CD4-positive, alpha-beta T cell (primary cell): ENCODE measurements at regions of chr6 and their contacts with region 1.

Region 1: DNA sequence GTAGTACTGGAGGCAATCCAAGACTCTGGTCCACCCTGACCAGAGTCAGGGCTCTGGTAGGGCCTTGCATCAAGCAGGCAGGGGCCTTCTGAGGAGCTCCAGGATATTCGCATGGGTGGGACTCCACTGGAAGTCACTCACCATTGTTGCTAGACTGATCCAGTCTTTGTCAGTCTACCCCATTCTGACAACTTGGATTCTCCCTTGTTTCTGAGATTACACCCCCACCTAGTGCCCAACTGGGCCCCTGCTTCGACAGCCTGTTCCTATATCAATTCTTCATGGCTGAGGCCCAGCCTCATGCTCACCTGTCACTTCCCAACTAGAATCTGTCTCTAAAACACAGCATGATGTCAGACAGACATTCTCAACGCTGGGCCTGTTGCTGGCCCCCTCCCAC is 5.2 kb downstream of the SLC35D3 start:
- DNase-seq: peak in 5 of 14 experiments; percentile 4 to 31 (median 21)
- ATAC-seq: no peak
- H3K4me3 ChIP-seq: no peak overlapping the region
- H3K4me3 Mint-ChIP-seq: no peak overlapping the region
- H3K27ac ChIP-seq: no peak overlapping the region
- H3K27ac Mint-ChIP-seq: no peak overlapping the region
- H3K4me1 ChIP-seq: peaks cover 17% of the 10 kb centered on the region
- H3K4me1 Mint-ChIP-seq: no peaks in the 10 kb centered on the region
- H3K27me3 ChIP-seq: peaks cover 21 to 27% of the 10 kb centered on the region in 2 experiments
- H3K27me3 Mint-ChIP-seq: peaks cover 55% of the 10 kb centered on the region
- CTCF ChIP-seq: peak; percentile 12

Region 2: GRCh38 chr6:136607932-136608772 is 319.1 kb before region 1 on chr6:
- CTCF ChIA-PET with region 1: no interaction called
- POLR2A ChIA-PET with region 1: no interaction called
- intact Hi-C with region 1: loop called in 1 of 2 experiments (anchors 5 kb)
- DNase-seq: peak; percentile 60 to 85 (median 74)
- ATAC-seq: peak; percentile 99
- H3K4me3 ChIP-seq: no peak overlapping the region
- H3K4me3 Mint-ChIP-seq: no peak overlapping the region
- H3K27ac ChIP-seq: no peak overlapping the region
- H3K27ac Mint-ChIP-seq: no peak overlapping the region
- H3K4me1 ChIP-seq: peaks cover 2% of the 10 kb centered on the region
- H3K4me1 Mint-ChIP-seq: no peaks in the 10 kb centered on the region
- H3K27me3 ChIP-seq: no peaks in the 10 kb centered on the region
- H3K27me3 Mint-ChIP-seq: no peaks in the 10 kb centered on the region
- CTCF ChIP-seq: peak; percentile 82

Region 3: GRCh38 chr6:136643850-136644596 is 283.3 kb before region 1 on chr6:
- CTCF ChIA-PET with region 1: no interaction called
- POLR2A ChIA-PET with region 1: no interaction called
- intact Hi-C with region 1: loop called in 1 of 2 experiments (anchors 1 kb)
- DNase-seq: peak; percentile 67 to 91 (median 80)
- ATAC-seq: peak; percentile 61
- H3K4me3 ChIP-seq: no peak overlapping the region
- H3K4me3 Mint-ChIP-seq: no peak overlapping the region
- H3K27ac ChIP-seq: no peak overlapping the region
- H3K27ac Mint-ChIP-seq: no peak overlapping the region
- H3K4me1 ChIP-seq: peaks cover 16% of the 10 kb centered on the region
- H3K4me1 Mint-ChIP-seq: no peaks in the 10 kb centered on the region
- H3K27me3 ChIP-seq: no peaks in the 10 kb centered on the region
- H3K27me3 Mint-ChIP-seq: no peaks in the 10 kb centered on the region
- CTCF ChIP-seq: peak; percentile 90